Heart left ventricle (tissue), 16 donors: ENCODE measurements at regions of chr1 and their contacts with region 1.

Region 1: GRCh38 chr1:111481387-111482221 is 7.8 kb downstream of the C1orf162 start:
- DNase-seq: peak; percentile 81 to 88 (median 83)
- ATAC-seq: peak; percentile 94 to 97 (median 96)
- H3K4me3 ChIP-seq: no peak overlapping the region
- H3K27ac ChIP-seq: peak overlapping the region in 8 of 12 donors; percentile 1 to 50 (median 35)
- H3K4me1 ChIP-seq: peaks cover 0 to 77% (median 18%) of the 10 kb centered on the region in 12 donors
- H3K27me3 ChIP-seq: no peaks in the 10 kb centered on the region
- CTCF ChIP-seq: peak; percentile 56 to 87 (median 77)
- POLR2A ChIP-seq: no peak

Region 2: DNA sequence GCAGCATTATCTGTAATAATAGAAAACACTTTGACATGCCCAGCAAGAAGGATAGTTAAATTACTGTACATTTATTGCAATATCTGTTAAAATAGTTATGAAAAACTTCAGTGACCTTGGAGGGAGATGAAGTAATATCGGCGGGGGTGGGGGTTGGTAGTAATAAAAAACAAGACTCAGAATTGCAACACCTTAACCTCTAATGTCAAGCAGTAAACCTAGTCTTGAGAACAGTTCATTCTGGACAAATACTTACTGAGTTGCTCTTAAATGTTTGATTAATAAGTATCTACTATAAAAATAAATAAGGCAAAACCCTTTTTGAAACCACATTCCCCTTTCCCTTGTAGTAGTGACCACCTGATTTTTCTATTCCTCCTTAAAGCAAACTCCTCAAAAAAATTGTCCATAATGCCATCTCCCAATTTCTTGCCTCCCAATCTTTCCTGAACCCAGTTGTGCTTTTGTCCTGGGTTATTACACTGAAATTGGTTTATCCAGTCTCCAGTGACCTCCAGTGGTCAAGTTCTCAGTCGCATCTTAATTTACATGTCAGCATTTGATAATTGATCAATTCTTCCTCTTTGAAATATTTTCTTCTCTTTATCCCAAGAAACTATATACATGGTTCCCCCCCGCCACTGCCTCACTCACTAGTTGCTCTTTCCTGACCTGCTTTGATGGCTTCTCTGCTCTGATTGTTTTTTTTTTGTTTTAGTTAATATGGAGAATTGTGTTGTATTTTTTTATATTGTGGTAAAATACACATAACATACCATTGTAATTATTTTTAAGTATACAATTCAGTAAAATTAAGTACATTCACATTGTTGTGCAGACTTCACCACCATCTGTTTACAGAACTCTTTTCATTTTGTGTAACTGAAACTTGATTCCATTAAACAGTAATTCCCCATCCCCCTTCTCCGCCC is 174.7 kb after region 1 on chr1:
- intact Hi-C with region 1: loop called in 4 of 10 experiments (anchors 2 kb)
- DNase-seq: no peak
- ATAC-seq: peak; percentile 19 to 73 (median 56)
- H3K4me3 ChIP-seq: no peak overlapping the region
- H3K27ac ChIP-seq: peak overlapping the region in 2 of 12 donors; percentile 3 to 40
- H3K4me1 ChIP-seq: peaks cover 0 to 67% (median 25%) of the 10 kb centered on the region in 12 donors
- H3K27me3 ChIP-seq: no peaks in the 10 kb centered on the region
- CTCF ChIP-seq: peak; percentile 42 to 82 (median 68)
- POLR2A ChIP-seq: no peak

Region 3: DNA sequence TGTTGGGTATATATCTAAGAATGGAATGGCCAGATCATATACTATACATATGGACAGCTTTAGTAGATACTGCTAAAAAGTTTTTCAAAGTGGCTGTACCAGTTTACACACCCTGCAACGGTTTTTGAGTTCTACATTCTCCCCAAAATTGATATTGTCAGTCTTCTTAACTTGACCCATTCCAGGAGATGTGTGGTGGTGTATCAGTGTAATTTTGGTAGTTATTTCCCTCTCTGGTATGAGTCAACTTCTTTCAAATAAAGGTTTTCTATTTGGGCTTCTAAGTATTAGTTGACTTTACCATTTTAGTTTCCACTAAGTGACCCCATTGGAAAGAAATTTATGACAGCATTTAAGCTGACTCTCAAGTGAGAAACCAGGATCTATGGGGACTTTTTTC is 228.4 kb after region 1 on chr1:
- intact Hi-C with region 1: loop called in 1 of 10 experiments (anchors 5 kb)
- DNase-seq: no peak
- ATAC-seq: no peak
- H3K4me3 ChIP-seq: no peak overlapping the region
- H3K27ac ChIP-seq: no peak overlapping the region
- H3K4me1 ChIP-seq: peaks cover 0 to 4% (median 0%) of the 10 kb centered on the region in 12 donors
- H3K27me3 ChIP-seq: no peaks in the 10 kb centered on the region
- CTCF ChIP-seq: no peak
- POLR2A ChIP-seq: no peak

Region 4: DNA sequence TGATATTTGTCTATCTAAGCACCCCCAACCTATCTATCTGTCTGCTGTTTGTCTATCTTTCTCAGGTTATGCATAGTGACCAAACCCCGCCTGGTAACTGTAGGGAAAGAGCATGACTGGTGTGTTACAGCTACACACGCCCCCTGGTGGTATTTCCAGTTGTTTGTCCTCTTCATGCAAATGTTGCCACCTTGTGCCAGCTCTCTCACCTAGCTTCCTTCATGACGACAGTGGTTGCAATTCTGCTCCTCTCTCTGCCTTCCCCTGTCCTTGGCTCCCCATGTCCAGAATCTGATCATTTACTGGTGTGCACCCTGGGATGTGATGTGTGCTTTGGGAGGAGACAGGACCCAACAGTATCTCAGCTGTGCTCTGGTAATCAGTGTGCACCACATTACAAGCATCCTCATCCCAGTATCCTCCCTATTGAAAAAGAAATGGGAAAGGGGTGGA is 265.7 kb after region 1 on chr1:
- intact Hi-C with region 1: loop called in 3 of 10 experiments (anchors 2 to 5 kb)
- DNase-seq: peak in 4 of 5 donors; percentile 62 to 73 (median 64)
- ATAC-seq: peak in 3 of 4 donors; percentile 48 to 60 (median 51)
- H3K4me3 ChIP-seq: no peak overlapping the region
- H3K27ac ChIP-seq: no peak overlapping the region
- H3K4me1 ChIP-seq: peaks cover 0 to 37% (median 15%) of the 10 kb centered on the region in 12 donors
- H3K27me3 ChIP-seq: no peaks in the 10 kb centered on the region
- CTCF ChIP-seq: peak; percentile 49 to 73 (median 62)
- POLR2A ChIP-seq: no peak

Region 5: DNA sequence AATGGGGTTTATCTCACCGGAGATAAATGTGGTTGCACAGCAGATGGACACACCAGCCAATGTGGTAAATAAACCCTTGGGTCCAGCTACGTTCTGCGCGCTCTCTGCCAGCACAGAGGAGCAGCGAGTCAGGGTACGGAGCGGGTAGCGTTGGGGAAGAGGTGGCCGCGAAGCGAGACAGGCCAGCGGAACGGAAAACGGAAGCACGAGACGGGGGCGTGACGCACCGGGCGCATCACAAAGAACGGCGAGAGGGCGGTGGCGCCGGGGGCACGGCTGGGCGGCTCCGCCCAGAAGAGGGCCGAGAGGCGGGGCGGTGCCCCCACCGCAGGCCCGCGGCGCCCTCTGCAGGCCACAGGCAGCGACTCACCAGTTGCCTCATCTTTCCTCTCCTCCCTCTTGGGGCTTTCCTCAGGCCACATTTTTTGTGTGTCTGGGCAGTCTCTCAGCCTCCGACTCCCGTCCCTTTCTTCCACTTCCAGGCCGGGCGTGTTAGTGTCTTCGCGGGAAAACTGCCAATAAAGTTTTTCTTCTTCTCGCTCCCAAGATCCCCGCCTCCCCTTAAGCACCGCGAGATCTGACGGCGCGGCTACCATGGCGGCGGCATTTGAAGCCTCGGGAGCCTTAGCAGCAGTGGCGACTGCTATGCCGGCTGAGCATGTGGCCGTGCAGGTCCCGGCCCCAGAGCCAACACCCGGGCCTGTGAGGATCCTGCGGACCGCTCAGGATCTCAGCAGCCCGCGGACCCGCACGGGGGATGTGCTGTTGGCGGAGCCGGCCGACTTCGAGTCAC is 273.9 kb after region 1 on chr1 and contains the start of gene DDX20:
- intact Hi-C with region 1: loop called in 2 of 10 experiments (anchors 5 kb)
- DNase-seq: peak; percentile 93 to 96 (median 95)
- ATAC-seq: peak; percentile 97 to 98 (median 98)
- H3K4me3 ChIP-seq: peak within 1 kb of the TSS; percentile 69 to 91 (median 80)
- H3K27ac ChIP-seq: peak within 1 kb of the TSS; percentile 86 to 96 (median 91)
- H3K4me1 ChIP-seq: peaks cover 0 to 38% (median 17%) of the 10 kb centered on the region in 12 donors
- H3K27me3 ChIP-seq: no peaks in the 10 kb centered on the region
- CTCF ChIP-seq: peak; percentile 81 to 100 (median 95)
- POLR2A ChIP-seq: no peak
- total RNA-seq, gene DDX20: 5.7 to 12.9 (median 7.4) TPM

Region 6: GRCh38 chr1:111769517-111770146 is 288.0 kb after region 1 on chr1:
- intact Hi-C with region 1: loop called in 7 of 10 experiments (anchors 2 to 5 kb)
- DNase-seq: peak in 1 of 5 donors; percentile 31
- ATAC-seq: peak in 3 of 4 donors; percentile 41 to 48 (median 42)
- H3K4me3 ChIP-seq: no peak overlapping the region
- H3K27ac ChIP-seq: no peak overlapping the region
- H3K4me1 ChIP-seq: peaks cover 0 to 3% (median 0%) of the 10 kb centered on the region in 12 donors
- H3K27me3 ChIP-seq: no peaks in the 10 kb centered on the region
- CTCF ChIP-seq: peak; percentile 71 to 89 (median 79)
- POLR2A ChIP-seq: no peak

Region 7: GRCh38 chr1:112369392-112370285 is 888.0 kb after region 1 on chr1:
- intact Hi-C with region 1: loop called in 2 of 10 experiments (anchors 10 kb)
- DNase-seq: peak; percentile 81 to 93 (median 86)
- ATAC-seq: peak; percentile 90 to 99 (median 98)
- H3K4me3 ChIP-seq: no peak overlapping the region
- H3K27ac ChIP-seq: no peak overlapping the region
- H3K4me1 ChIP-seq: peaks cover 0 to 5% (median 0%) of the 10 kb centered on the region in 12 donors
- H3K27me3 ChIP-seq: peaks cover 0 to 8% (median 0%) of the 10 kb centered on the region in 9 donors
- CTCF ChIP-seq: peak; percentile 93 to 99 (median 97)
- POLR2A ChIP-seq: no peak